ENCODE measurements at regions of chr14 and their contacts with region 1.

Region 1: GRCh38 chr14:32865886-32866285 is 72.8 kb upstream of the NPAS3 start:
- DNase-seq: no peak
- ATAC-seq: no peak
- H3K4me3 Mint-ChIP-seq: no peak overlapping the region
- H3K27ac Mint-ChIP-seq: no peak overlapping the region
- H3K4me1 Mint-ChIP-seq: no peaks in the 10 kb centered on the region
- H3K27me3 Mint-ChIP-seq: no peaks in the 10 kb centered on the region
- CTCF ChIP-seq: no peak

Region 2: GRCh38 chr14:32813401-32813800 is 52.5 kb before region 1 on chr14:
- CTCF ChIA-PET with region 1: no interaction called
- POLR2A ChIA-PET with region 1: no interaction called
- intact Hi-C with region 1: no loop called
- DNase-seq: no peak
- ATAC-seq: no peak
- H3K4me3 Mint-ChIP-seq: no peak overlapping the region
- H3K27ac Mint-ChIP-seq: no peak overlapping the region
- H3K4me1 Mint-ChIP-seq: no peaks in the 10 kb centered on the region
- H3K27me3 Mint-ChIP-seq: no peaks in the 10 kb centered on the region
- CTCF ChIP-seq: no peak

Region 3: GRCh38 chr14:32846821-32847365 is 19.0 kb before region 1 on chr14:
- CTCF ChIA-PET with region 1: no interaction called
- POLR2A ChIA-PET with region 1: no interaction called
- intact Hi-C with region 1: no loop called
- DNase-seq: no peak
- ATAC-seq: no peak
- H3K4me3 Mint-ChIP-seq: no peak overlapping the region
- H3K27ac Mint-ChIP-seq: no peak overlapping the region
- H3K4me1 Mint-ChIP-seq: no peaks in the 10 kb centered on the region
- H3K27me3 Mint-ChIP-seq: no peaks in the 10 kb centered on the region
- CTCF ChIP-seq: no peak

Region 4: DNA sequence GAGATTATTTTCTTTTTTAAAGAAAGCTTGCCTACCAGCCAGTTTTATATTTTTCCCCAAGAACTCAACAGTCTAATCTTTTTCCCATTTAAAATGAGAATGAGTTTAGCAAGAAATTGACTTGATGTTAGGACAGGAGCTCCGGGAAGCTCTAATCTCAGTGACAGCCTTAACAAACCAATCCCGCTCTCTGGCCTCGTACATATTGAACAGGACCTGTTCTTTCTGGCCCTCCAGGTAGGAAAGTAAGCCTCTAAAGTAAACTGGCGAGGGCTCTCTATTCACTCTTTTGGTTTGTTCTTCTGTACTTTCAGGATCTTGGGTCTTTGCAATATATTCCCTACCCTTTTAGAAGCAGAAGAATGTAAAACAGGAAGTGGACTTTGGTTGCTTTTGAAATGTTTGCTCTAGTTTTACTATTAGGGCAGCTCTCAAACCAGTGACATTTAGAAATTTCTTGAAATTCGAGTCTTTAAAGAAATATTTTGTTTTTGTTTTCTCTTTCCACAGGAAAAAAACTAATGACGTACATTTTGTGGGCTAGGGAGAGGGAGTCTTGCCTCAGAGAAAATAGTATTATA is 54.9 kb after region 1 on chr14:
- CTCF ChIA-PET with region 1: no interaction called
- POLR2A ChIA-PET with region 1: no interaction called
- intact Hi-C with region 1: loop called (anchors 2 kb)
- DNase-seq: no peak
- ATAC-seq: no peak
- H3K4me3 Mint-ChIP-seq: no peak overlapping the region
- H3K27ac Mint-ChIP-seq: no peak overlapping the region
- H3K4me1 Mint-ChIP-seq: no peaks in the 10 kb centered on the region
- H3K27me3 Mint-ChIP-seq: no peaks in the 10 kb centered on the region
- CTCF ChIP-seq: no peak

Region 5: GRCh38 chr14:32977913-32978312 is 112.0 kb after region 1 on chr14:
- CTCF ChIA-PET with region 1: no interaction called
- POLR2A ChIA-PET with region 1: no interaction called
- intact Hi-C with region 1: no loop called
- DNase-seq: no peak
- ATAC-seq: no peak
- H3K4me3 Mint-ChIP-seq: no peak overlapping the region
- H3K27ac Mint-ChIP-seq: no peak overlapping the region
- H3K4me1 Mint-ChIP-seq: no peaks in the 10 kb centered on the region
- H3K27me3 Mint-ChIP-seq: no peaks in the 10 kb centered on the region
- CTCF ChIP-seq: no peak

Measured in activated CD8-positive, alpha-beta T cell treated with anti-CD3 and anti-CD28 coated beads for 36 hours (primary cell).